MCF 10A (cell line): ENCODE measurements at regions of chr1 and their contacts with region 1.

Region 1: DNA sequence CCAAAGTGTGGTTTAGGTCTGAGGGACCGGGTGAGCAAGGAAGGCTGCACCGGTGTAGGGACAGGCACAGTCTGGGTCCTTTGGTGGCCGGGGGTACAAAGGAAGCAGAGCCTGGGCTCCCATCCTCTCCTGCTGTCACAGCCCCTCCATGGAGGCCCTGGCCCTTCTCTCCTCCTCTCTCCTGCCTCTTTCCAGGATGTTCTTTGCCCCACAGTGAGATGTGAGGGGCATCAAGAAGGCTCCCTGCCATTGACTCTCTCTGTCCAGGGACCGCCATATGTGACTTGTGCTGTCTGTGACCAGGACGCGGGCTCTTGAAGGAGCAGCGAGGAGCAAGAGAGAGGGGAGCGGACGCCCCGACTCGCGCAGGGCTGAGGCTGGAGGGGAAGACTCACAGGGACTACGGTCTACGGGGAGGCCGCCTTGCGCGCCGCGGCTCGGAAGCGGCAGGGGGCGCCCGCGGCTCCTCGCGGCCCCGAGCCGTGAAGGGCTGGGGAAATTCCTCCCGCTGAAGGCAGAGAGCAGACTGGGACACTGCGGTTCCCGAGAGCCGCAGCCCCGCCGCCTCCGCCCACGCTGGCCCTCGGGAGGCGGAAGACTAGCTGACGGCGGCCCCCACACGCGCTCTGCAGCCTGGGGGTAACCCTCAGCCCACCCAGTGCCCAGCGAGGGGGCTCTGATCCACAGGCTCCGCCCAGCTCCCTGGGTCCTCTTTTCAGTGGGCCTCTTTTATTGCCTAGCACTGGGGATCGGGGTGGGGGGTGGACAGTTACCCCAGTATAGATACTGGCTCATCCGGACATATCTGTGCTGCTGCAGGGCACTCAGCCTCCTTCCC is 40.8 kb downstream of the MAB21L3 start:
- DNase-seq: peak; percentile 72
- H3K4me3 Mint-ChIP-seq: peak overlapping the region; percentile 20
- H3K27ac Mint-ChIP-seq: no peak overlapping the region
- H3K4me1 Mint-ChIP-seq: peaks cover 4% of the 10 kb centered on the region
- H3K27me3 Mint-ChIP-seq: peaks cover 12% of the 10 kb centered on the region
- CTCF ChIP-seq: peak; percentile 90

Region 2: GRCh38 chr1:116122955-116123757 is 28.8 kb before region 1 on chr1:
- CTCF ChIA-PET with region 1: no interaction called
- POLR2A ChIA-PET with region 1: no interaction called
- intact Hi-C with region 1: no loop called
- DNase-seq: peak; percentile 75
- H3K4me3 Mint-ChIP-seq: no peak overlapping the region
- H3K27ac Mint-ChIP-seq: no peak overlapping the region
- H3K4me1 Mint-ChIP-seq: peaks cover 8% of the 10 kb centered on the region
- H3K27me3 Mint-ChIP-seq: no peaks in the 10 kb centered on the region
- CTCF ChIP-seq: no peak

Region 3: GRCh38 chr1:116164604-116165368 is 12.8 kb after region 1 on chr1:
- CTCF ChIA-PET with region 1: interaction called, 12 read pairs
- POLR2A ChIA-PET with region 1: interaction called, 3 read pairs
- intact Hi-C with region 1: no loop called
- DNase-seq: no peak
- H3K4me3 Mint-ChIP-seq: no peak overlapping the region
- H3K27ac Mint-ChIP-seq: no peak overlapping the region
- H3K4me1 Mint-ChIP-seq: no peaks in the 10 kb centered on the region
- H3K27me3 Mint-ChIP-seq: no peaks in the 10 kb centered on the region
- CTCF ChIP-seq: no peak

Region 4: GRCh38 chr1:116257341-116257767 is 105.4 kb after region 1 on chr1:
- CTCF ChIA-PET with region 1: no interaction called
- POLR2A ChIA-PET with region 1: no interaction called
- intact Hi-C with region 1: no loop called
- DNase-seq: no peak
- H3K4me3 Mint-ChIP-seq: no peak overlapping the region
- H3K27ac Mint-ChIP-seq: no peak overlapping the region
- H3K4me1 Mint-ChIP-seq: no peaks in the 10 kb centered on the region
- H3K27me3 Mint-ChIP-seq: no peaks in the 10 kb centered on the region
- CTCF ChIP-seq: no peak

Region 5: GRCh38 chr1:116340506-116341240 is 188.7 kb after region 1 on chr1:
- CTCF ChIA-PET with region 1: interaction called, 6 read pairs
- POLR2A ChIA-PET with region 1: interaction called, 3 read pairs
- intact Hi-C with region 1: loop called (anchors 5 kb)
- DNase-seq: peak; percentile 92
- H3K4me3 Mint-ChIP-seq: peak overlapping the region; percentile 16
- H3K27ac Mint-ChIP-seq: peak overlapping the region; percentile 63
- H3K4me1 Mint-ChIP-seq: peaks cover 19% of the 10 kb centered on the region
- H3K27me3 Mint-ChIP-seq: no peaks in the 10 kb centered on the region
- CTCF ChIP-seq: no peak

Region 6: GRCh38 chr1:116372587-116373444 is 220.9 kb after region 1 on chr1 and contains the start of gene ATP1A1:
- CTCF ChIA-PET with region 1: interaction called, 14 read pairs
- POLR2A ChIA-PET with region 1: interaction called, 24 read pairs
- intact Hi-C with region 1: loop called (anchors 10 kb)
- DNase-seq: peak; percentile 93
- H3K4me3 Mint-ChIP-seq: peak within 1 kb of the TSS; percentile 94
- H3K27ac Mint-ChIP-seq: peak within 1 kb of the TSS; percentile 78
- H3K4me1 Mint-ChIP-seq: peaks cover 18% of the 10 kb centered on the region
- H3K27me3 Mint-ChIP-seq: no peaks in the 10 kb centered on the region
- CTCF ChIP-seq: no peak
- total RNA-seq, gene ATP1A1: 361 and 378 TPM in 2 replicates

Region 7: GRCh38 chr1:116390195-116390594 is 238.2 kb after region 1 on chr1:
- CTCF ChIA-PET with region 1: interaction called, 11 read pairs
- POLR2A ChIA-PET with region 1: no interaction called
- intact Hi-C with region 1: no loop called
- DNase-seq: no peak
- H3K4me3 Mint-ChIP-seq: no peak overlapping the region
- H3K27ac Mint-ChIP-seq: no peak overlapping the region
- H3K4me1 Mint-ChIP-seq: peaks cover 43% of the 10 kb centered on the region
- H3K27me3 Mint-ChIP-seq: no peaks in the 10 kb centered on the region
- CTCF ChIP-seq: no peak

Region 8: DNA sequence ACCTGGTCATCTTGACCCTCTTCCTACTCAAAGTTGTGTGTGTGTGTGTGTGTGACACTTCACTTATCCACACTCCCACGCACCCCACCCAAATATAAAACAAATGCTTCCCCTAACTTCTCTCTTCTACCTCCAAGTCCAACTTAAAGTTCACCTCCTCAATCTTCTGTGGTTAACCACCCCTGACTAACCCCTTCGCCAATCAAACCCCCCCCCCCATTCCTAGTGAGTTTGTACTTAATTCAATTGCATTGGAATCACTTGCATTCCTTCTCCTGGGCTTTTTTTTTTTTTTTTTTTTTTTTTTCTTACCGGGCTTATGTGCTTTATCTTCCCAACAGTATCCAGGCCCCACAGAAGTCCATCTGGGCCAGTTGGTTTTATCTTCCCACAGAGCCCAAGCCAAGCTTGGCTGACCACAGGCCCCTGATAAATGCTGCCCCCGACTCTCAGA is 340.4 kb after region 1 on chr1:
- CTCF ChIA-PET with region 1: interaction called, 191 read pairs
- POLR2A ChIA-PET with region 1: interaction called, 3 read pairs
- intact Hi-C with region 1: no loop called
- DNase-seq: no peak
- H3K4me3 Mint-ChIP-seq: no peak overlapping the region
- H3K27ac Mint-ChIP-seq: no peak overlapping the region
- H3K4me1 Mint-ChIP-seq: peaks cover 39% of the 10 kb centered on the region
- H3K27me3 Mint-ChIP-seq: no peaks in the 10 kb centered on the region
- CTCF ChIP-seq: no peak

Region 9: GRCh38 chr1:116498789-116499628 is 347.1 kb after region 1 on chr1:
- CTCF ChIA-PET with region 1: interaction called, 13 read pairs
- POLR2A ChIA-PET with region 1: no interaction called
- intact Hi-C with region 1: no loop called
- DNase-seq: peak; percentile 73
- H3K4me3 Mint-ChIP-seq: no peak overlapping the region
- H3K27ac Mint-ChIP-seq: no peak overlapping the region
- H3K4me1 Mint-ChIP-seq: peaks cover 17% of the 10 kb centered on the region
- H3K27me3 Mint-ChIP-seq: no peaks in the 10 kb centered on the region
- CTCF ChIP-seq: peak; percentile 86